ENCODE measurements at regions of chr1 and their contacts with region 1.

Region 1: DNA sequence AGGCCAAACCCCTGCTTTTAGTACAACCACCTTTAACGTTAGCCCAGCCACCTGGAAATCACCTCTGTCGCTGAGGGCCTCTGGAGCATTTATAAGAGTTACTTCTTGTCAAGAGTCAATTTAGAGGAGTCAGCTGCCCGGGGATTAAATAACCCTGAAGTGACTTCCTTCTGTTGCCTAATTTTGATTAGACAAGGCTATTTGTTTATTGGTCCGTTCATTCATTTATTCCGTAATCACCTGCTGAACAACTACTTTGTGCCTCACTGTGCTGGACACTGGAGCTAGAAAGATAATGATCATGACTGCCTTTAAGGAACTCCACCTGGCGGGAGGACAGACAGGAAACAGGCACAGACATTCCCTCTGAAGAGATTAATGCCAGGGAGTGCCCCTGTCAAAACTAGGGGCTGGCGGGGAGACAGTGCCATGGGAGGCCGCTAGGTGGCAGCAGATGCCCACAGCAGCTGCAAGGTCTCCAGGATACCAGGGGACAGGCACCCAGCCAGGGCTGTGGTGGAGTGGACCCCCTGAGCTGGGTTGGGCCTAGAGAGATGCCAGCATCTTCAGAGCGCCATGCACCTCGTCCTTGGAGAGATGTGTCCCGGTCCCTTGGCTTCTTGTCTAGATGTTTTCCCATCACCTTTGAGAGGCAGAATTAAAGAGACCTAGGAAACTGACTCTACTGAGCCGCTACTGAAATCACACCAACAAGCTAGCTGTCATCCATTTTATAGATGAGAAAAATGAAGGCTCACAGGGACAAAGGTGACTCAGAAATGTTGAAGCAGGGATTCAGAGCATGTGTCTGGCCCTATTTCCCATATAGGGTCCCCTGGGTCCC is 3.7 kb downstream of the REN start:
- DNase-seq: peak; percentile 93

Region 2: GRCh38 chr1:204145033-204145504 is 17.4 kb before region 1 on chr1:
- CTCF ChIA-PET with region 1: no interaction called
- POLR2A ChIA-PET with region 1: no interaction called
- DNase-seq: no peak

Region 3: GRCh38 chr1:204207136-204207616 is 44.7 kb after region 1 on chr1:
- CTCF ChIA-PET with region 1: interaction called, 18 read pairs
- POLR2A ChIA-PET with region 1: no interaction called
- DNase-seq: peak; percentile 91

Region 4: GRCh38 chr1:204341380-204341779 is 178.9 kb after region 1 on chr1:
- CTCF ChIA-PET with region 1: no interaction called
- POLR2A ChIA-PET with region 1: no interaction called
- DNase-seq: no peak

Region 5: GRCh38 chr1:204398217-204399081 is 236.0 kb after region 1 on chr1:
- CTCF ChIA-PET with region 1: interaction called, 16 read pairs
- POLR2A ChIA-PET with region 1: no interaction called
- DNase-seq: peak; percentile 90

Measured in HEK293T (cell line).